Activated CD4-positive, alpha-beta memory T cell treated with anti-CD3 and anti-CD28 coated beads for 36 hours (primary cell): ENCODE measurements at regions of chr3 and their contacts with region 1.

Region 1: DNA sequence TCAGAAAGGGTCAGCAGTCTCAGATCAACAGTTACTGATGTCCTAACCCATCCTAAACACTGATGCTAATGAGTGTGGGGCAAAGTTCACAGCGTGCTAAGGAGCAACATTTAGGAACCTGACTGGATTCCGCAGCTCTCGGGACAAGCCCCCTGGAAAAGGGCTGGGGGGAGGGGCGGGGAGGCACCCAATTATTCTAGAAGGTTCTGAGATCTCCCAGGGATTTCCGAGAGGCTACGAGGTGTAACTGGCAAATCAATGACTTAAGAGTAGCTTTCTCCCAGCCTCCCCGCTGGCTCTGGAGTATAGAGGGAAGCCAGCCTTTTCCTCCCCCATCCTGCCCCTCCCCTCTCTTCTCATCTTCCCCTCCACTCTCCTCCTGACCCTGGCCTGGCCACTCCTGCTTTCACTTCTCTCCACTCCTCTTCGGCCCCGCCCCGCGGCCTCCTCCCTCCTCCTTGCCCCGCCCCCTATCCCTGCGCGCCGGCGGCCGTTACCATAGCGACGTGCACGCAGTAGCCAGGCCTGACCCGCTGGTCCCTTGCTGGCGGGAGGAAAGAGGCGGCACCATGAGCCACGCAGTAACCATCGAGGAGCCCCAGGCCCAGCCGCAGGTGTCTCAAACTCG is at the start of gene CFAP91:
- DNase-seq: peak; percentile 92
- H3K4me3 Mint-ChIP-seq: peak within 1 kb of the TSS; percentile 74
- H3K27ac Mint-ChIP-seq: no peak within 1 kb of the TSS
- H3K4me1 Mint-ChIP-seq: peaks cover 43% of the 10 kb centered on the region
- H3K27me3 Mint-ChIP-seq: no peaks in the 10 kb centered on the region
- total RNA-seq, gene CFAP91: 0.29 to 0.31 TPM

Region 2: DNA sequence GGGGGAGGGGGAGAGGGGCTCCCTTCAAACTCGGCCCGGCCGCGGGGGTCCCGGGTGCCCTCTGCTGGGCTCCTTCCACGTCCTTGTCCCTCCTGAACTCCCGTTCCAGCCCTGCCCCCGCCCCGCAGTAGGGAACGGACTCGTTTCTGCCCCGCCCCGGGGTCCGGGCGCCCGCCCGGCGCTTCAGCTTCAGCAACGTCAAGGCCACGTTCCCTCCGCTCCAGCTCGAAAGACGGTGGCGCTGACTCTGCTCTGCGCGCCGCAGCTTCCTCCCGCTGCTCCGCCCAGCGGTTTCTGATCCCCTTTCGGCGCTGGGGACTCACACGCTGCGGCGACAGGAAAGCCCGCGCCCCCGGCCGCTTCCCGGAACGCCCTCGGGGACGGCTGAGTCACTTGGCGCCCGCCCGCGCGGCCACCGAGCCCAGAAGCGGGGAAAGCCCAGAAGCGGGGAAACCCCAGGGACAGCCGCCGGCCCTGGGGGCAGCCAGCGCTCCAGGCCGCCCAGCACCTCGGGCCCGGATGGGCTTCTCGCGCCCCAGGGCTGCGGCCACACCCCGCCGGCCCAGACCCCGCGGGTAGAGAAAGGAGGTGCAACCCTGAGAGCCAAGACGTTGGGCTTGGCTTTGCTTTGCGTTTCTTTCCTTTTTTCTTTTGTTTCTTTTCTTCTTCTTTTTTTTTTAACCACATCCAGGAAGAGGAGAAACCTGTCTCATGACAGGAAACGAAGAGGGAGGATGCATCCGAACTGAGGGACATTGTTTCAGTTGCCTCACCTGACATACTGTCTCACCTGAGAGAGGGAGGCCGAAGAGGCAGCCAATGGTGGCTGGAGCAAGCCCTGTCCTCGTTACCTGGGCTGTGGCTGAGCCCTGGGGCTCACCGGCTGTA is 379.6 kb before region 1 on chr3:
- CTCF ChIA-PET with region 1: no interaction called
- POLR2A ChIA-PET with region 1: no interaction called
- intact Hi-C with region 1: loop called (anchors 2 kb)
- DNase-seq: peak; percentile 97
- H3K4me3 Mint-ChIP-seq: peak overlapping the region; percentile 82
- H3K27ac Mint-ChIP-seq: peak overlapping the region; percentile 95
- H3K4me1 Mint-ChIP-seq: peaks cover 41% of the 10 kb centered on the region
- H3K27me3 Mint-ChIP-seq: no peaks in the 10 kb centered on the region

Region 3: DNA sequence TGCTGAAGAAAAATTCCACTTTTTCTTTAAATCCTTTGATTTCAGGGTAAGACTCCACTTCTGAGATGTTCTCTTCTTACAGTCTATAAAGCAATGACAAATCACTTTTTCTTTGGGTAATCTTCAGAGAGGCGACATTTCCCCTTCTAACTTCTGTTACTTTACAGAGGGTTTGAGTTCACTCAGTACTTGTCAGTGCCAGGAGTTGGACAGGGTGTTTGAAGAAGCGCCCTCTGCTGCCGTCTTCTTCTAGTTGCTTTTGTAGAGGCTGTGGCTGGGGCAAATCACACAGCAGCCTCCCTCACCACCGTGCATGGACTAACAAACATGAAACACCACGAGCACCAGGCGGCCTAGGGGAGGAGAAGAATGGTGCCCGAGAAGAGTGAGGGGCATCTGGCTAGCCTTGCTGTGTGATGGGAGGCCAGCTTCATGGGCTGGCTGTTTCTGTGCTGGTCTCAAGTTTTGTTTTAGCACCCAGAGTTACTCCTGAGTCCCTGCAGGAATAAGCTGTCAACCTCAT is 143.1 kb before region 1 on chr3 and contains the start of gene CD80:
- CTCF ChIA-PET with region 1: no interaction called
- POLR2A ChIA-PET with region 1: no interaction called
- intact Hi-C with region 1: loop called (anchors 1 kb)
- DNase-seq: peak; percentile 84
- H3K4me3 Mint-ChIP-seq: peak within 1 kb of the TSS; percentile 24
- H3K27ac Mint-ChIP-seq: peak within 1 kb of the TSS; percentile 56
- H3K4me1 Mint-ChIP-seq: peaks cover 24% of the 10 kb centered on the region
- H3K27me3 Mint-ChIP-seq: no peaks in the 10 kb centered on the region
- total RNA-seq, gene CD80: 3.4 to 3.7 TPM

Region 4: GRCh38 chr3:119628816-119629445 is 73.7 kb before region 1 on chr3:
- CTCF ChIA-PET with region 1: no interaction called
- POLR2A ChIA-PET with region 1: no interaction called
- intact Hi-C with region 1: no loop called
- DNase-seq: no peak
- H3K4me3 Mint-ChIP-seq: no peak overlapping the region
- H3K27ac Mint-ChIP-seq: peak overlapping the region; percentile 77
- H3K4me1 Mint-ChIP-seq: peaks cover 41% of the 10 kb centered on the region
- H3K27me3 Mint-ChIP-seq: peaks cover 3% of the 10 kb centered on the region

Region 5: DNA sequence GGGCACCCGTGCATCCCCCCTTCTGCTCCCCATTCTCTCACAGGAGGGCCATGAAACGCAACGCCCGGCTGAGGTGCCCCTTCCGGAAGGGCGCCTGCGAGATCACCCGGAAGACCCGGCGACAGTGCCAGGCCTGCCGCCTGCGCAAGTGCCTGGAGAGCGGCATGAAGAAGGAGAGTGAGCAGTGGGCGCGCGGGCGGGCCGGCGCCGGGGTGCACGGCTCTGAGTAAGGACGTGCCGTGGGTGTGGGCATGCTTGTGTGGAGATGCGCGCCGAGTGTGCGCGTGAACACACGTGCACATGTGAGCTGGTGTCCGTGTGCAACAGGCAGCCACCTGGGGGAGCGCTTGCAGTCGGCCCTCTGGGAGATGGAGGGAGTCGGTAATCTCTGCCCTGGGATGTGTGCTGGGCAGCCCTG is 107.4 kb after region 1 on chr3:
- CTCF ChIA-PET with region 1: no interaction called
- POLR2A ChIA-PET with region 1: no interaction called
- intact Hi-C with region 1: loop called (anchors 5 kb)
- DNase-seq: peak; percentile 72
- H3K4me3 Mint-ChIP-seq: peak overlapping the region; percentile 68
- H3K27ac Mint-ChIP-seq: peak overlapping the region; percentile 31
- H3K4me1 Mint-ChIP-seq: peaks cover 11% of the 10 kb centered on the region
- H3K27me3 Mint-ChIP-seq: no peaks in the 10 kb centered on the region